ENCODE measurements at regions of chr1 and their contacts with region 1.

Region 1: GRCh38 chr1:64268653-64269557 is 65.5 kb downstream of the UBE2U start:
- DNase-seq: peak; percentile 61
- ATAC-seq: peak; percentile 97
- H3K4me3 ChIP-seq: peak overlapping the region in 1 of 2 experiments; percentile 28; a peak in 2 of 4 replicates
- H3K27ac ChIP-seq: peak overlapping the region; percentile 69
- H3K4me1 ChIP-seq: peaks cover 13% of the 10 kb centered on the region
- H3K27me3 ChIP-seq: no peaks in the 10 kb centered on the region; the same call in 1 of the 2 replicates
- CTCF ChIP-seq: peak; percentile 80

Region 2: GRCh38 chr1:64327119-64327518 is 58.2 kb after region 1 on chr1:
- CTCF ChIA-PET with region 1: no interaction called
- POLR2A ChIA-PET with region 1: no interaction called
- in situ Hi-C with region 1: no loop called
- intact Hi-C with region 1: no loop called
- DNase-seq: no peak
- ATAC-seq: no peak
- H3K4me3 ChIP-seq: no peak overlapping the region
- H3K27ac ChIP-seq: no peak overlapping the region
- H3K4me1 ChIP-seq: no peaks in the 10 kb centered on the region
- H3K27me3 ChIP-seq: no peaks in the 10 kb centered on the region
- CTCF ChIP-seq: no peak

Region 3: DNA sequence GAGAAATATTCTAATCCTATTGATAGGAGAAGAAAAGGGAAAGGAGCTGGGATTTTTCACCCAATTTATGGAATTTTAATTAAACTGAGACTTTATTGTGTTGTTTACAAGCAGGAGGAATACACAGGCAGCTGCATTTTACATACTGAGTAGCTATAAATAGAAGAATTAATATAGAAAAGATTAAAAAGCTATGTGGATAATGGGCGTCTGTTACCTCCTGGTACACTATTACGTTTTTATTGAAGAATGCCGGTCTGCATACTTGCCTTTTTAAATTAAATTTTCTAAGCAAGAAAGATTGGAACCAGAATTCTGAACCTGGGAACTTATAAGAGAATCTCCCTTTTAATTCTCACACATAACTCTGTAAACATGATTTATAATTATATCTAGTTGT is 148.9 kb after region 1 on chr1:
- CTCF ChIA-PET with region 1: no interaction called
- POLR2A ChIA-PET with region 1: no interaction called
- in situ Hi-C with region 1: no loop called
- intact Hi-C with region 1: no loop called
- DNase-seq: no peak
- ATAC-seq: no peak
- H3K4me3 ChIP-seq: no peak overlapping the region
- H3K27ac ChIP-seq: no peak overlapping the region
- H3K4me1 ChIP-seq: no peaks in the 10 kb centered on the region
- H3K27me3 ChIP-seq: no peaks in the 10 kb centered on the region
- CTCF ChIP-seq: no peak

Region 4: DNA sequence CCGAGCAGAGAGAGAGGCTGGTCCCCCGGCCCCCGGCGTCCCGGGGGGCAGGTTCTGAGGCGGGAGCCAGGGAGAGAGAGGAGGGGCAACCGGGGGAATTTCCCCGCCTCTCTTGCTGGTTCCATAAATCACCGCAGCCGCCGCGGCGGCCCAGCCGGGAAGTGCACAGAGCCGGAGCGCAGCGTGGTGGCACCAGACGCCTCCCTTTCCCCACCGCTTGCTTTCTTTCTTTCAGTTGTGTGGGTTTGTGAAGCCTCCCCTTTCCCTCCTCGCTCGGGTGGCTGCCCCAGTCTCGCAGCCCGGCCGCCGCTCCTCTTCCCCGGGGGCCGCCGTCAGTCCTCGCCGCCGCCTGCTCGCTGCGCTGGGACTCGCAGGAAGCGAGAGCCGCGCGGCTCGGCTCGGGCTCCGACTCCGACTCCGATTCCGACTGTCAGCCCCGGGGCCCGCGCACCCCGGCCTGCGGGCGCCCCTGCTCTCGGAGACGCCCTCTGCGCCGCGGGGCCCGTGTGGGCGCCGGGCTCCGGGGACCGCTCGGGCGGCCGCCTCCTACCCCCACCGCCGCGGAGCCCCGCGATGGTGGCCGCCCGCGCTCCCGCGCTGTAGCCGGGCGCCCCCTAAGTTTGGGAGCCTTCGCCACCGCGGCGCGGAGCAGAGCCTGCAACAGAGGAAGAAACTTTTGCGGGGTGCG is 201.2 kb after region 1 on chr1 and contains the start of gene CACHD1:
- CTCF ChIA-PET with region 1: no interaction called
- POLR2A ChIA-PET with region 1: no interaction called
- in situ Hi-C with region 1: no loop called
- intact Hi-C with region 1: loop called (anchors 5 kb)
- DNase-seq: peak; percentile 38
- ATAC-seq: peak; percentile 89
- H3K4me3 ChIP-seq: peak within 1 kb of the TSS; percentile 92 to 95
- H3K27ac ChIP-seq: peak within 1 kb of the TSS; percentile 88
- H3K4me1 ChIP-seq: peaks cover 37% of the 10 kb centered on the region
- H3K27me3 ChIP-seq: no peaks in the 10 kb centered on the region
- CTCF ChIP-seq: peak; percentile 58
- total RNA-seq, gene CACHD1: 29.9 TPM

Region 5: GRCh38 chr1:64686828-64687724 is 418.2 kb after region 1 on chr1:
- CTCF ChIA-PET with region 1: no interaction called
- POLR2A ChIA-PET with region 1: no interaction called
- in situ Hi-C with region 1: no loop called
- intact Hi-C with region 1: loop called (anchors 5 kb)
- DNase-seq: peak; percentile 30
- ATAC-seq: peak; percentile 81
- H3K4me3 ChIP-seq: no peak overlapping the region
- H3K27ac ChIP-seq: no peak overlapping the region
- H3K4me1 ChIP-seq: no peaks in the 10 kb centered on the region
- H3K27me3 ChIP-seq: no peaks in the 10 kb centered on the region
- CTCF ChIP-seq: peak; percentile 79